ENCODE measurements at regions of chr2 and their contacts with region 1.

Region 1: DNA sequence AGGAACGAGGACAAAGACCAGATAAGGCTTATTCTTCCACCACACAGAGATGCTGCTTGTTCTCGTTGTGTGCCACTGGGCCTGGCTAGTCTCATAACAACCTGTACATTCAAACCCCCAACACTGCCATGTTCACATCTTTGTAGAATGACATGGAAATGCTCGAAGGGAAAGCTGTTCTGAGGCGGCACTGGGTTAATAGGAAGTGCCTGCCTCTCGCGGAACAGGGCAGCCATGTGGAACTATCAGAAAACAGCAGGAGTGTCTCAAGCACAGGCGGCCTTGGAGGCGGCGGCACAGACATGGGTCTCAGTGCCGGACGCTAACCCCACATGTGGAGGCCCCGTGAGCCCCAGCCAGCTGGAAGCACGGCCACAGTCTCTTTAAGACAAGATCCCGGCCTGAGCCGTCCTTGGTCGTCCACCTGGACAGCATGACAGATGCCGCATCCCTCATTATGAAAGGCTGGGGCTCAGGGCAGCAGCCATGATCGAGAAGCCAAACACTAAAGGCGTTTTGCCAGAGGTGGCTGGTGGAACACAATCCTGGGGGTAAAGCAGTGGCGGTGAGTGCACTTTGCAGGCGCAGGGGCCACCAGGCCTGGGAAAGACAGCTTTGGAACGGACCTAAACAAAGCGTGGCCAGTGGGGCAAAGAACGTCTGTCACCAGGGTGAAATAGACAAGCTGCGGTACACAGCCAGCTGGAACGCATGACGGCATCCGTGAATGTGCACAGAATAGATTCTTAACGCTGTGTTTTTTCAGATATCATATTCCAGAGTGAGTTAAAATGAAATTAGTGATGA is 161.0 kb downstream of the HDAC4 start:
- DNase-seq: peak in 5 of 10 donors; percentile 64 to 73 (median 68)
- H3K4me3 ChIP-seq: peak overlapping the region in 56 of 59 donors; percentile 2 to 57 (median 33)
- H3K27ac ChIP-seq: peak overlapping the region; percentile 67 to 99 (median 94)
- H3K27me3 ChIP-seq: no peaks in the 10 kb centered on the region
- CTCF ChIP-seq: no peak

Region 2: GRCh38 chr2:239293775-239294430 is 54.1 kb after region 1 on chr2:
- intact Hi-C with region 1: loop called in 1 of 2 experiments (anchors 5 kb)
- DNase-seq: peak in 6 of 10 donors; percentile 2 to 28 (median 24)
- H3K4me3 ChIP-seq: no peak overlapping the region
- H3K27ac ChIP-seq: peak overlapping the region in 24 of 59 donors; percentile 1 to 99 (median 68)
- H3K27me3 ChIP-seq: no peaks in the 10 kb centered on the region
- CTCF ChIP-seq: no peak

Region 3: DNA sequence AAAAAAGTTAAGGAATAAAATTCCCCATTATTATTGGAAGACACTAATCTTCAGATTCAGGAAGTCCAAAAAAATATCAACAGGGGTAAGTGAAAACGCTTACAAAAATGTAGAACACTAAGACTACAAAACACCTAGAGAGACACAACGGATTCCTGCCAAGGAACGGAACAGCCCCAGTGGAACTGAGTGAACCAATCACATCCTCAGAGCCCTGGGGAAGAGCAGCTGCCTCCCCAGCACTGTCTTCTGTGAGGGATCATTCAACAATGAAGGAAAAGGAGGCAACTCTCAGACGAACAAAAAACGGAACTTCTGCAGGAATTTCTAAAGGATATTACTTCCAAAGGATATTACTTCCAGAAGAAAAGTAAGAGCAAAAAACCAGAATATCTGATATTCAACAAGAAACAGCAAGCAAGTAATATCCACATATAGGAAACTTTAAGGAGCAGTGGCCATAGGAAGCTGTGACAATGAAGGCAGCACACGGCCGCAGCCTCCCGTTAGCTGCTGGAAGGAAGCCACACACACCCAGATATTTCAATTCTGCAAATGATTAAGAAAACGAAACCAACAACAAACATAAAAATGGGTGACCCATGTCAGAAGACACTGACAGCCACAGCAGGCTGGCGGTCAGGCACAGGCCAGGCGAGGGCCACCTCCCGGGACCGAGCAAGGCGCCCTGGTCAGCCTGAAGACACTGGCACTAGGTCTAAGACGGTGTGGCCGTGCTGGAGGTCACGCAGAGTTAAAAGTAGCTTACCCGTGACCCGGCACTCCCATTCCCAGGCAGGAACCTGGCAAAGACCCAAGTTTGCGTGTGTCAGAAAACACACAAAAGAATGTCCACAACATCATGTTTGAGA is 79.2 kb after region 1 on chr2:
- intact Hi-C with region 1: no loop called
- DNase-seq: peak in 2 of 10 donors; percentile 12 to 46
- H3K4me3 ChIP-seq: peak overlapping the region in 36 of 59 donors; percentile 6 to 62 (median 36)
- H3K27ac ChIP-seq: peak overlapping the region in 52 of 59 donors; percentile 11 to 95 (median 80)
- H3K27me3 ChIP-seq: no peaks in the 10 kb centered on the region
- CTCF ChIP-seq: no peak

Region 4: GRCh38 chr2:239339726-239340601 is 100.2 kb after region 1 on chr2:
- intact Hi-C with region 1: loop called in 1 of 2 experiments (anchors 5 kb)
- DNase-seq: no peak
- H3K4me3 ChIP-seq: no peak overlapping the region
- H3K27ac ChIP-seq: peak overlapping the region in 32 of 59 donors; percentile 7 to 76 (median 42)
- H3K27me3 ChIP-seq: no peaks in the 10 kb centered on the region
- CTCF ChIP-seq: no peak

Measured in dorsolateral prefrontal cortex (tissue), 120 donors.